Heart left ventricle (tissue), 16 donors: ENCODE measurements at regions of chr11 and their contacts with region 1.

Region 1: GRCh38 chr11:69010964-69011623 is 2.0 kb downstream of the MRGPRF start:
- DNase-seq: peak; percentile 67 to 86 (median 79)
- ATAC-seq: peak in 3 of 4 donors; percentile 61 to 67 (median 64)
- H3K4me3 ChIP-seq: peak overlapping the region in 11 of 12 donors; percentile 24 to 65 (median 49)
- H3K27ac ChIP-seq: peak overlapping the region in 10 of 12 donors; percentile 23 to 93 (median 72)
- H3K4me1 ChIP-seq: peaks cover 0 to 58% (median 32%) of the 10 kb centered on the region in 12 donors
- H3K27me3 ChIP-seq: peaks cover 0 to 43% (median 4%) of the 10 kb centered on the region in 9 donors
- CTCF ChIP-seq: no peak
- POLR2A ChIP-seq: peak in 1 of 2 donors; percentile 29

Region 2: GRCh38 chr11:68889948-68890446 is 121.1 kb before region 1 on chr11:
- intact Hi-C with region 1: loop called in 1 of 10 experiments (anchors 5 kb)
- DNase-seq: peak in 4 of 5 donors; percentile 70 to 81 (median 78)
- ATAC-seq: peak; percentile 30 to 84 (median 59)
- H3K4me3 ChIP-seq: no peak overlapping the region
- H3K27ac ChIP-seq: peak overlapping the region; percentile 26 to 90 (median 81)
- H3K4me1 ChIP-seq: peaks cover 6 to 32% (median 18%) of the 10 kb centered on the region in 12 donors
- H3K27me3 ChIP-seq: no peaks in the 10 kb centered on the region
- CTCF ChIP-seq: peak in 10 of 12 donors; percentile 14 to 66 (median 46)
- POLR2A ChIP-seq: no peak